H1 (cell line): ENCODE measurements at regions of chr1 and their contacts with region 1.

Region 1: GRCh38 chr1:8671306-8671917 is 146.0 kb downstream of the RERE start:
- DNase-seq: no peak
- H3K4me3 ChIP-seq: no peak overlapping the region
- H3K27ac ChIP-seq: no peak overlapping the region
- H3K4me1 ChIP-seq: peaks cover 5 to 18% (median 8%) of the 10 kb centered on the region in 4 experiments; a peak in 6 of 7 replicates
- H3K27me3 ChIP-seq: no peaks in the 10 kb centered on the region
- CTCF ChIP-seq: peak; percentile 30 to 77 (median 47)
- EP300 ChIP-seq: no peak
- POLR2A ChIP-seq: no peak
- RAD21 ChIP-seq: peak; percentile 66 to 72

Region 2: DNA sequence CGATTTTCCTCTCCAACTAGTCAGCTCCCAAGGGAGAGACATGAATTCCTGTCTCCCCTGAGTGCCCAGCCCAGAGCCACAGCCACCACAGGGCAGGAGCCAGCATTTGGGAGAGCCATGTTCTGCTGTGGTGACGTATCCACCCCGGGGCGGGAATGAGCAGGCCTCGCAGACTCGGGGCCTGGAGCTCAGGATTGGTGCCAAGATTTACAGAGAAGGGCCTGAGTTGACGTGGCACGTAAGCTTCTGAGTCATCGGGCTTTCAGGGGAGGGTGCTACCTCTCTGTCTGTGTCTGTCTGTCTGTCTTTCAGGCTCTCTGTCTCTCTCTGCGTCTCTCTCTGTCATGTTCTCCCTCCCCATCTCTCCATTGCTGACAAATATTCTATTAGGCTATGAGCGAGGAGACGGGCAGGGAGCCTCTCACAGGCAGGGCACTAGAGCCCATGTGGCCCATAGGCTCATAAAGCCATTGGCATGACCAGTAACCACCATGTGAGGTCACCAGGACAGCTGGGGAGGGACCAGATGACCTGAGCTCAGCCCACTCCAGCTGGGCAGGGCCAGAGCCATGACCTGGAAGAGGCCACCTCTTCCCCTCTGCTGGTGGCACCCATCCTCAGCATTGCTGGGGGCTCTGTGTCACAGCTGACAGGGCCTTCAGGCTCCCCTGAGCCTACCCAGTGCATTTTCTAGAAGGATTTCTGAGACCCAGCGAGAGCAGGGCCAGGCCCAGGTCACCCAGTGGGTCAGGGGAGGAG is 1200.4 kb before region 1 on chr1:
- CTCF ChIA-PET with region 1: no interaction called
- POLR2A ChIA-PET with region 1: no interaction called
- DNase-seq: no peak
- H3K4me3 ChIP-seq: no peak overlapping the region
- H3K27ac ChIP-seq: no peak overlapping the region
- H3K4me1 ChIP-seq: no peaks in the 10 kb centered on the region; a peak in 1 of 7 replicates
- H3K27me3 ChIP-seq: no peaks in the 10 kb centered on the region; a peak in 1 of 7 replicates
- CTCF ChIP-seq: no peak
- EP300 ChIP-seq: no peak
- POLR2A ChIP-seq: no peak
- RAD21 ChIP-seq: no peak

Region 3: DNA sequence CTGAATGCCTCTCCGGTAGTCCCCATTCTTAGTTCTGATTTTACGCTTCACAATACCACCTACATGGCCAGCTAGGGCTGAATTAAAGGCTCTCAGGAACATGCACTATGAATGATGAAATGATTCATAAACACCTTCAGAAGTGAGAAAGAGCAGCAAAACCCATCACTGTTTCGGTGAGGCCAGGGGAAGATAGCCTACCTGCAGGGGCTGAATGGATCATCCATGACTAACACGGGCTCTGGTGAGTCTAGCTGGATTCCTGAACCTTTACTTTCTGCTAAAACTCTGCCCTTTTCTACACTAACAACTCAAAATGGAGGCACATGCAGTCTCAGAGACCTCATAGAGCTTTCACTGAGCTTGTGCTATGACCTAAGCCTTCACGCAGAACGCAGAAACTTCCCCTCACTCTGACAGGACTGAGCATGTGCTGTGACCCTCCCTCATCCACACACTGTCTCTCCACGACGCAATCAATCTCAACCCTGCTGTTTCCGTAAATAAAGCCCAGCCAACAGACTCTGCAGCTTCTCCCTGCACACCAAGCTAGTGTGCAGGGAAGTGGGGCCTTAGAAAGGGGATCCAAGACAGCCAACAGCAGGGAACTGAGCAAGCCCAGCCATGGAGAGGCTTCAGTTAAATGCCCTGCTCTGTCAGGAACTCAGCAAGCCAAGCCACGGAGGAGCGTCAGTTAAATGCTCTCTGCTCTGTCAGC is 145.7 kb before region 1 on chr1:
- CTCF ChIA-PET with region 1: no interaction called
- POLR2A ChIA-PET with region 1: no interaction called
- DNase-seq: peak in 1 of 2 experiments; percentile 60
- H3K4me3 ChIP-seq: peak overlapping the region in 1 of 4 experiments; percentile 3; a peak in 3 of 8 replicates
- H3K27ac ChIP-seq: peak overlapping the region; percentile 71; the same call in 1 of the 2 replicates
- H3K4me1 ChIP-seq: peaks cover 7 to 14% (median 10%) of the 10 kb centered on the region in 4 experiments
- H3K27me3 ChIP-seq: no peaks in the 10 kb centered on the region
- CTCF ChIP-seq: no peak
- EP300 ChIP-seq: no peak
- POLR2A ChIP-seq: peak in 1 of 2 experiments; percentile 29; a peak in 1 of 3 replicates
- RAD21 ChIP-seq: no peak

Region 4: DNA sequence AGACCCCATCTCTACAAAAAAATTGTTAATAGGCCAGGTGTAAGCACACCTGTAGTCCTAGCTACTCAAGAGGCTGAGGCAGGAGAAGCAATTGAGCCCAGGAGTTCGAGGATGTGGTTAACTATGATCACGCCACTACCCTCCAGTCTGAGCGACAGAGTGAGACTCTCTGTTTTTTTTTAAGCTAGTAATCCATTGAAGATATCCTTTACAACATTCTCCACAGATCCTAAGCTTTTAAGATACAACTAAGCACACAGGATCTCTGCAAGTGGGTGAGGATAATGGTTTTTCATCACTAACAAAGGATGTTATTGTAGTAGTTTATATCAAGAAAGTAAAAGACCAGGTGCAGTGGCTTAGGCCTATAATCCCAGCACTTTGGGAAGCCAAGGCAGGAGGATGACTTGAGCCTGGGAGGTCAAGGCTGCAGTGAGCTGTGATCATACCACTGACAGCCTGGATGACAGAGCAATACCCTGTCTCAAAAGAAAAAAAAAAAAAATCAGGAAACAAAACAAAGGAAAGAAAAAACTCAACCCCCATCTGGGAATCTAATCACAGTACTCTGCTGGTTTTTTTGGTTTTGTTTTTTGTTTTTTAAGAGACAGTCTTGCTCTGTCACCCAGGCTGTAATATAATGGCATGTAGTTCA is 20.0 kb before region 1 on chr1:
- CTCF ChIA-PET with region 1: interaction called, 12 read pairs
- POLR2A ChIA-PET with region 1: no interaction called
- DNase-seq: no peak
- H3K4me3 ChIP-seq: no peak overlapping the region
- H3K27ac ChIP-seq: no peak overlapping the region
- H3K4me1 ChIP-seq: peaks cover 0 to 5% (median 0%) of the 10 kb centered on the region in 4 experiments; a peak in 1 of 7 replicates
- H3K27me3 ChIP-seq: no peaks in the 10 kb centered on the region
- CTCF ChIP-seq: no peak
- EP300 ChIP-seq: no peak
- POLR2A ChIP-seq: no peak
- RAD21 ChIP-seq: no peak

Region 5: GRCh38 chr1:8660411-8660828 is 11.0 kb before region 1 on chr1:
- CTCF ChIA-PET with region 1: interaction called, 14 read pairs
- POLR2A ChIA-PET with region 1: no interaction called
- DNase-seq: no peak
- H3K4me3 ChIP-seq: no peak overlapping the region
- H3K27ac ChIP-seq: no peak overlapping the region
- H3K4me1 ChIP-seq: peaks cover 0 to 22% (median 9%) of the 10 kb centered on the region in 4 experiments; a peak in 4 of 7 replicates
- H3K27me3 ChIP-seq: no peaks in the 10 kb centered on the region
- CTCF ChIP-seq: no peak
- EP300 ChIP-seq: no peak
- POLR2A ChIP-seq: no peak
- RAD21 ChIP-seq: no peak

Region 6: GRCh38 chr1:8687039-8687438 is 15.6 kb after region 1 on chr1:
- CTCF ChIA-PET with region 1: interaction called, 17 read pairs
- POLR2A ChIA-PET with region 1: interaction called, 4 read pairs
- DNase-seq: no peak
- H3K4me3 ChIP-seq: no peak overlapping the region
- H3K27ac ChIP-seq: no peak overlapping the region
- H3K4me1 ChIP-seq: peaks cover 5 to 9% (median 7%) of the 10 kb centered on the region in 4 experiments; a peak in 4 of 7 replicates
- H3K27me3 ChIP-seq: no peaks in the 10 kb centered on the region
- CTCF ChIP-seq: no peak
- EP300 ChIP-seq: no peak
- POLR2A ChIP-seq: no peak
- RAD21 ChIP-seq: no peak

Region 7: DNA sequence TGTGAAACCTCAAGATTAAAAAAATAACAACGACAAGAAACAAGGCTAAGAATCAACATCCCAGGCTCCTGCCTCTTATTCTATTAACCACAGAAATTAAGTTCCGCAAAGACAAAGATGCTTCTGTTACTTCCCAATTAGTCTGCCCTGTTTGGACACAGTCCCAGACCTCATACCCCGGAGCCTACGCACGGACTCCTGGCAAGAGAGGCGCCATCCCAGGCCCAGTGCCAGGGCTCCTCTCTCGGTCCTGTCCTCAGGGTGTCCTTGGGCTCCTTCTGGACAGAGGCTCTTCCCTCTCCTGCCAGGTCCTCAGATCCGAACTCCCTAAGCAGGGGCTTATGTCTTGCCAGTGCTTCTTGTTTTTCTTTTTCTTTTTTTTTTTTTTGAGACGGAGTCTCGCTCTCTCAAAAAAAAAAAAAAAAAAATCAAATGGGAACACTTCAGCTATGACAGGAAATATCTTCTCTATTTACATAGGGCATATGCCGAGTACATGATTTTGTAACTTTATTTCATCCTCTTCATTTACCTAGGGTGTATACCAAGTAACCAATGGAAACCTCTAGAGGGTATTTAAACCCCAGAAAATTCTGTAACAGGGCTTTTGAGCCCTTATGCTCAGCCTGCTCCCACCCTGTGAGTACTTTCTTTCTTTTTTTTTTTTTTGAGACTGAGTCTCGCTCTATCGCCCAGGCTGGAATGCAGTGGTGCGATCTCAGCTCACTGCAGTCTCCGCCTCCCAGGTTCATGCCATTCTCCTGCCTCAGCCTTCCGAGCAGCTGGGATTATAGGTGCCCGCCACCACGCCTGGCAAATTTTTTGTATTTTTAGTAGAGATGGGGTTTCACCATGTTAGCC is 218.7 kb after region 1 on chr1:
- CTCF ChIA-PET with region 1: no interaction called
- POLR2A ChIA-PET with region 1: no interaction called
- DNase-seq: no peak
- H3K4me3 ChIP-seq: no peak overlapping the region
- H3K27ac ChIP-seq: no peak overlapping the region
- H3K4me1 ChIP-seq: no peaks in the 10 kb centered on the region
- H3K27me3 ChIP-seq: no peaks in the 10 kb centered on the region; a peak in 1 of 7 replicates
- CTCF ChIP-seq: no peak
- EP300 ChIP-seq: no peak
- POLR2A ChIP-seq: no peak
- RAD21 ChIP-seq: no peak